ENCODE measurements at regions of chr1 and their contacts with region 1.

Region 1: DNA sequence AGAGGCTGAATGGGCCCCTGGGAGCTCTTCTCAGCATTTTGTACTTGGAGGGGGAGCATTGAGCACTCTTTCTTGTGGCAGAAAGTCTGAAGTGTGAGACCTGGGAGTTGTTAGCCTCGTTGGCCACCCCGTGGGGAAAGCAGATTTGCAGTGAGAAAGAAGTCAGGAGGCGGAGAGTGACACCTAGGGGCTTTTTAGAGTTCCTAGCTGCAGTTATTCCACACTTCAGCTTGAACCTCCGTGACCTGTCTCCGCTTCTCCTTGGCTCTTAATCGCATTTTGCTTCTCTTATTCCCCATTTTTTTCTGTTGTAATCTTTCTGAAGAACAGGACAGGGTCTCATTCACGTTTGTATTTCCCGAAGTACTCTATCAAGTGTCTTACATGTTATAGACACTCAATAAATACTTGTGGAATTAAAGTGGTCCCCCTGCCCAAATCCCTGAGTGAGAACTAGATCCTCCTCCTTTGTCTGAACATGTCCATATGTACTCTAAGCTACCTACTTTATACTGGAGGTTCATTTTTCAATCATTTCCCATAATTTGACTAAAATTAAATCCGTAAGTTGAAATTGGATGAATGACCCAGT is 14.5 kb upstream of the C1orf141 start:
- DNase-seq: peak; percentile 66
- H3K4me3 ChIP-seq: no peak overlapping the region
- H3K27ac ChIP-seq: no peak overlapping the region
- H3K27me3 ChIP-seq: peaks cover 5% of the 10 kb centered on the region
- CTCF ChIP-seq: peak; percentile 91

Region 2: GRCh38 chr1:66968574-66968973 is 180.7 kb before region 1 on chr1:
- CTCF ChIA-PET with region 1: interaction called, 12 read pairs
- POLR2A ChIA-PET with region 1: no interaction called
- DNase-seq: no peak
- H3K4me3 ChIP-seq: no peak overlapping the region
- H3K27ac ChIP-seq: no peak overlapping the region
- H3K27me3 ChIP-seq: no peaks in the 10 kb centered on the region
- CTCF ChIP-seq: no peak

Region 3: DNA sequence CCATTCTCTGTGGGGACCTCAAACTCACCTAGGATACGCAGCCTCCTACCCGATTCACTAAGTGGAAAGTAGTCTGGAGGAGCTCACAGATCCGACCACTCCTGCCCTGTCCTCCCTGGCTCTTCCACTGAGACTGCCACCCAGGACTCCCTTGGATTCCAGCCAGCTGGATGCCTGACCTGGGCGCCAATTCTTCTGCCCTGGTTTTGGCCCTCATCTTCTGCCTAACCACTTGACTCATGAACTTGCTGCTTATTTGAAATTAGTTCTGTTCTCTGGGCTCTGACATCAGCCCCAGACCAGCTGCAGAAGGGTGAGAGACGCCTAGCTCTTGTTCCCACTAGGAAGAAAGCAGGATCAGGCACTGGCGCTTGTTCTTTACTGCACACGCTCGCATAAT is 144.2 kb before region 1 on chr1:
- CTCF ChIA-PET with region 1: interaction called, 49 read pairs
- POLR2A ChIA-PET with region 1: no interaction called
- DNase-seq: no peak
- H3K4me3 ChIP-seq: no peak overlapping the region
- H3K27ac ChIP-seq: no peak overlapping the region
- H3K27me3 ChIP-seq: no peaks in the 10 kb centered on the region
- CTCF ChIP-seq: no peak

Region 4: DNA sequence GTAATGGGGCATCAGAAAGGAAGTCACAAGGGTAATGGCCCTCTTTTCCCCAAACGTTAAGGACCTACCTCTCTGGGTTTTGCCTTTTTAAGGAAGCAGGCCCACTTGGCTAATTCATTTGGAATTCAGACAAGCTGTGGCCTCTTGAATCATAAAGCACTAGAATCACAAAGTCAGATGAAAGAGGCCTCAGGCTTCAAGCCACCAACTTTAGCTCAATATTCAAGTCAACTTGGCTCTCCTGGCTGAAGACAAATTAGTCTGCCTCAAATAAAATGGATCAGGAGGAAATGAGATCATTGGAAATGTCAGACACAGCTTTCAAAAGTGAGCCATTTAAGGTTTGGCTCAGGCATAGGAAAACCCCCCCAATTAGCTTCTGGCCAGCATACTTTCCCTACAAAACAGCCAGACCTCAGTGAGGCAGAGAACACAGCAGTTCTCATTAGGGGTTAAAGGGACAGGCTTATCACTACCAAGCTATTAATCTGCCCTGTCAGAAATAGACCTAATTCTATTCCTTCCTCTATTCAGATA is 129.6 kb before region 1 on chr1:
- CTCF ChIA-PET with region 1: interaction called, 28 read pairs
- POLR2A ChIA-PET with region 1: no interaction called
- DNase-seq: no peak
- H3K4me3 ChIP-seq: no peak overlapping the region
- H3K27ac ChIP-seq: peak overlapping the region; percentile 68
- H3K27me3 ChIP-seq: no peaks in the 10 kb centered on the region
- CTCF ChIP-seq: no peak

Region 5: DNA sequence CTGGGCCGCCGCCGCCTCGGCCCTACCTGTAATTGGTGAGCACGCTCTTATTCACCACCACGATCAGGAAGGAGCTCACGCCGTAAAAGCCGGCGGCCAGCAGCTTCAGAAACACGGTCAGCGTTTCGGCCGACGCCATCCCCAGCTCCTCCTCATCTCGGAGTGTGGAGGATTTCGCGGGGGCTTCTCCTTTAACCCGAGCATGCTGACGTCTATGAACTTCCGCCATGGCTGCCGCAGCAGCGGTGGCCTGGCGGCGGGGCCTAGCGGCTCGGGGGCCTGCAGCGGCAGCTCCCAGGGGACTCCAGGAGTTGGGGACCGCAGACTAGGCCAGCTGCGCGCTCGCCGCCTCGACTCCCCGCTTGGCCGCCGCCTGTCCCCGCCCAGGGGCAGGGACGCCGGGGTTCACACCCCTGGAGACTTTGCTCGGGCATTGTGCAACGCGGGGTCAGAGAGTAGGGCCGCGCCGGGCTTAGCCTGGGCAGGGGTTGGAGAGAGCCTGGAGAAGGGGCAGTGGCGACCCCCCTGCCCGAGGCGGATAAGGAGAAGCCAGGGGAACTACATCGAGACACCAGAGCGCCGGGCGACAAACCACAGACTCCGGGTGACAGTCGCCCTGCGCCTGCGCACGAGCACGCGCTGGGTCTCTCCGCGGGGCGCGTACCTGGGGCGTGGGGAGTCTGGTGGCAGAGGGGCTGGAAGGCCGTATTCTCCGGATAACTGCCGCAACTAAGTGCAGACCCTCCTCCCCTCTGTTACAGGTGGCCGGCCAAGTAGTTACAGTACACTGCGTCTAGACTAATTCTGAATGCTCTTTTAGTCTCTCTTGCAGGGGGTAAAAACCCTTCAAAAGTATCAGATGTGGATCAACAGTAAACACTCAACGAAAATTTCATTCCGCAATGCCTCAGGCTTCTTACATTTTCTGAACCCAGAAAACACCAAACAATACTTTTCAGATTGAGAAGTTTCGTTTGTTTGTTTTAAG is 95.2 kb before region 1 on chr1 and contains the start of gene SLC35D1:
- CTCF ChIA-PET with region 1: interaction called, 38 read pairs
- POLR2A ChIA-PET with region 1: interaction called, 3 read pairs
- DNase-seq: no peak
- H3K4me3 ChIP-seq: peak within 1 kb of the TSS; percentile 89
- H3K27ac ChIP-seq: peak within 1 kb of the TSS; percentile 79
- H3K27me3 ChIP-seq: no peaks in the 10 kb centered on the region
- CTCF ChIP-seq: no peak
- polyA plus RNA-seq, gene SLC35D1: 21.8 and 28.9 TPM in 2 replicates

Region 6: DNA sequence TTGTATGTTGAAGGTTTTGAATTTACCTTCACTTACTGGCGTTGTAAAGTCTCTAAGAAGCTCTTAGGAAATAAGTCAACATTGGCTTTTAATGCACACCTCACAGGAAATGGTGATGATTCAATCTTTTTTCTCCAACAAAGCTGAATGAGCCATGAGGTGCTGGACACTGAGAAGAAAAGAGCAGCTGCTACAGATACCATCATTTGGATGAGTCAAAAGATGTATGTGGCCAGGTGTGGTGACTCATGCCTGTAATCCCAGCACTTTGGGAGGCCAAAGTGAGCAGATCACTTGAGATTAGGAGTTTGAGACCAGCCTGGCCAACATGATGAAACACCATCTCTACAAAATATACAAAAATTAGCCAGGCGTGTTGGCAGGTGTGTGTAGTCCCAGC is 13.7 kb after region 1 on chr1:
- CTCF ChIA-PET with region 1: interaction called, 20 read pairs
- POLR2A ChIA-PET with region 1: no interaction called
- DNase-seq: no peak
- H3K4me3 ChIP-seq: no peak overlapping the region
- H3K27ac ChIP-seq: no peak overlapping the region
- H3K27me3 ChIP-seq: peaks cover 2% of the 10 kb centered on the region
- CTCF ChIP-seq: no peak

Region 7: GRCh38 chr1:67250051-67250653 is 100.9 kb after region 1 on chr1:
- CTCF ChIA-PET with region 1: no interaction called
- POLR2A ChIA-PET with region 1: no interaction called
- DNase-seq: no peak
- H3K4me3 ChIP-seq: no peak overlapping the region
- H3K27ac ChIP-seq: no peak overlapping the region
- H3K27me3 ChIP-seq: no peaks in the 10 kb centered on the region
- CTCF ChIP-seq: no peak

Region 8: GRCh38 chr1:67532452-67533216 is 383.4 kb after region 1 on chr1:
- CTCF ChIA-PET with region 1: no interaction called
- POLR2A ChIA-PET with region 1: no interaction called
- DNase-seq: peak; percentile 78
- H3K4me3 ChIP-seq: no peak overlapping the region
- H3K27ac ChIP-seq: no peak overlapping the region
- H3K27me3 ChIP-seq: no peaks in the 10 kb centered on the region
- CTCF ChIP-seq: peak; percentile 66

Measured in AG04450 (cell line).